Activated T-helper 2 cell treated with anti-CD3 and anti-CD28 coated beads, Interferon-gamma antibody, Interleukin-2, Interleukin-4, amounts not matched to agents 10 μg/mL and 5 μg/mL and 100 μg/mL, durations not matched to agents 14 hours and 24 hours and 36 hours (primary cell): ENCODE measurements at regions of chr2 and their contacts with region 1.

Region 1: DNA sequence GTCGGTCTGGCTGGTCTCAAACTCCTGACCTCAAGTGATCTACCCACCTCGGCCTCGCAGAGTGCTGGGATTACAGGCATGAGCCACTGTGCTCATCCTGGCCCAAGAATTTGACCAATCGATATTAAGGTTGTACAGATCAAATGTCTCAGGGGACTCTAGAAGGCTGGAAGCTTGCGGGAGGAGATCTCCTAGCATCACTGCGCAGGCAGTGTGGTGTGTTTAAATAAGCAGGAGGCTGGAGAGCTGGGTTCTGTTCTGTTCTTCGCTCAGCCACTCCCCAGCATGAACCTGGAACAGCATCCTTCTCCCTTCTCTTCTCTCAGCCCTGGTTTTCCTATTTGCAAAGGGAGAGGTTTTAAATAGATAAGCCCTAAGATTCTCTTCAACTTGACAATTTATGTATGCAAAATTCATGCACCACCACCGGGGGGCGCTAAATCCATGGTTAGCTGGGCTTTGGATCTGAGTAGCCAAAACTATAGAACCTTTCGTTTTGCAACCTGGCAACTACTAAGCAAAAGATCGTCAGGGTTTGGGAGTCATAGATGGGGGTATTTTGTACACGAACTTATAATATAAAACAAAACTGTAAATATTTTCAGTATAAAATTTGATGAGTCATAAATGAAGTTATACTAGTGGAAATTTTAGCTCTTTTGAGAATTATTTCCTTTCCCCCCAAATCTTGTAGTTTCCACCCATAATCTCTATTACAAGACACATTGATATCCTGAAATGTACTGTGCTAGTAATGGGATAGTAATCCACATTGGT is 60.6 kb downstream of the SLC16A14 start:
- DNase-seq: peak; percentile 68
- H3K4me3 Mint-ChIP-seq: no peak overlapping the region
- H3K27ac Mint-ChIP-seq: no peak overlapping the region
- H3K4me1 Mint-ChIP-seq: peaks cover 10% of the 10 kb centered on the region
- H3K27me3 Mint-ChIP-seq: no peaks in the 10 kb centered on the region

Region 2: GRCh38 chr2:230160112-230160660 is 152.1 kb after region 1 on chr2:
- intact Hi-C with region 1: loop called (anchors 1 kb)
- DNase-seq: peak; percentile 38
- H3K4me3 Mint-ChIP-seq: no peak overlapping the region
- H3K27ac Mint-ChIP-seq: peak overlapping the region; percentile 24
- H3K4me1 Mint-ChIP-seq: peaks cover 13% of the 10 kb centered on the region
- H3K27me3 Mint-ChIP-seq: no peaks in the 10 kb centered on the region

Region 3: DNA sequence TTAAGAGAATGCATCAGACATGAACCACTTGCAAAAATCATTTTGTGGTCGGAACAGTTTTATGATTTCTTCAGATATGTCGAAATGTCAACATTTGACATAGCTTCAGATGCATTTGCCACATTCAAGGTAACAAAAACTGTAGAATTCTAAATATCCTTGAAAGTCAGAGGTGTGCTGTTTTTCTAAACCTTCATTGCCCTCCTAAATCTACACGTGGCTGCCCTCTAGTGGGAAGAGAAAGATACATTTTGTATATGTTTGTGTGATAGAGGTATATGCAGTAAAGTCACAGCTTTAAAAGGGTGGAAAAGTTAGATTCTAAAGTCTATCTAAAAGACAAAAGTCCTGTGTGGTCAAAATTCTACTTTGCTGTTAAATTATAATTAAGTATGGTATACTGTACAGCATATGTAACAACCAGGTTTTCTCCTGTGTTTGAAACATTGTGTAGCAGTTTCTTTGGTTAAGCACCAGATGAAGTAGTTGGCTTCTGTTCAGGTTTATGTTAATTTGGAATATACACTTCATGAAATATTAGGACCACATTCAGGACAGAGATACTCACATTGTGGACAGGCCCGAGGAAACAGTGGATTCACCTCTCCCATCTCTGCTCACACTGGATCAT is 790.8 kb after region 1 on chr2:
- intact Hi-C with region 1: loop called (anchors 10 kb)
- DNase-seq: no peak
- H3K4me3 Mint-ChIP-seq: no peak overlapping the region
- H3K27ac Mint-ChIP-seq: peak overlapping the region; percentile 50
- H3K4me1 Mint-ChIP-seq: peaks cover 20% of the 10 kb centered on the region
- H3K27me3 Mint-ChIP-seq: no peaks in the 10 kb centered on the region